CD4-positive, alpha-beta T cell (primary cell): ENCODE measurements at regions of chr20 and their contacts with region 1.

Region 1: GRCh38 chr20:44475694-44476560 is at the start of gene TTPAL:
- DNase-seq: peak; percentile 75 to 95 (median 86)
- ATAC-seq: peak; percentile 95
- H3K4me3 ChIP-seq: peak within 1 kb of the TSS; percentile 90
- H3K4me3 Mint-ChIP-seq: peak within 1 kb of the TSS; percentile 95
- H3K27ac ChIP-seq: peak within 1 kb of the TSS; percentile 89 to 98
- H3K27ac Mint-ChIP-seq: peak within 1 kb of the TSS; percentile 96
- H3K4me1 ChIP-seq: peaks cover 18% of the 10 kb centered on the region
- H3K4me1 Mint-ChIP-seq: peaks cover 26% of the 10 kb centered on the region
- H3K27me3 ChIP-seq: no peaks in the 10 kb centered on the region
- H3K27me3 Mint-ChIP-seq: no peaks in the 10 kb centered on the region
- CTCF ChIP-seq: no peak
- total RNA-seq, gene TTPAL: 9.0 to 9.9 TPM

Region 2: DNA sequence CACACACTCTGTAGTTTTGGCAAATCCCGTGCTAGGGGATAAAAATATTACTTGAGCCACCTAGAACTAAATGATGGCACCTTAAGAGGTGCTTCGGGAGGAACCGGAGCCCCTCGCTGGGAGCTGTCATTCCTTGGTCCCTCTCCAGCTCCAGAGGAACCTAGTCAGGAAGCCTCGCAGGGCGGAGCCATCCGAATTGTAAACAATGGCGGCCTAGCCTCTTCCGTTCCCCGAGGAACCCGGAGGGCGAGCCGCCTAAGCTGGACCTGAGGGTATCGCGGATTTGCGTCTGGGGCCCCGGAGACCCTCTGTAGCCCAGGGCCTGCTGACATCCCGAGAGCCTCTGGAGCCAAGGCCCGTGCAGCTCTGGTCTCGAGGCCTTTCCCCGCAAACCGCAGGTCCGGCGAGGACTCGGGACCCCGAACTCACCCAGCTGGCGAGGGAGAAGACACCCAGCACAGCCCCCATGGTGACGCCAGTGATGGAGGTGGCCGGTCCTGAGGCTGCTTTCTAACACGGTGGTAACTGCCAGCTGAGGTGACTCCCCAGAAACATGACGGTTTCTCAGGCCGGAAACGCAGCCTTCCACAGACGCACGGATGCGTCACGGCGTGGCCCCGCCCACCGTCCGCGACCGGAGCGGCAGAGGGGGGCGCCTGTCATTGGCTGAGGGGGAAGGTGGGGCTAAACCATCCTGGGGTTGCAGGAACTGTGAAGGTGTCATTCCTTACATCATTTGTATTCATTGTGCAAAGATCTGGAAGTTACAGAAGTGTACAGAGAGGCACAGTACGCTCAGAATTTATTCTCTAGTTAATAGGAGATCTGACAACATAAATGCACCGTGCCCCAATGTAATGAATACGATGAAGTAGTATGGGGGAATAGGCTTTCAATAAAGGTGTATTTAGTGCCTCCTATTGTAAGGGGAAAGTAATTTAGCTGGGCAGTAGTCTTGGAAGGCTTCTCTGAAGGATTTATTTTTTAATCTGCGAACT is 45.9 kb after region 1 on chr20 and contains the start of gene SERINC3:
- CTCF ChIA-PET with region 1: no interaction called
- POLR2A ChIA-PET with region 1: interaction called, 29 read pairs
- intact Hi-C with region 1: loop called (anchors 2 kb)
- DNase-seq: peak; percentile 90 to 99 (median 97)
- ATAC-seq: peak; percentile 93
- H3K4me3 ChIP-seq: peak within 1 kb of the TSS; percentile 98
- H3K4me3 Mint-ChIP-seq: peak within 1 kb of the TSS; percentile 89
- H3K27ac ChIP-seq: peak within 1 kb of the TSS; percentile 95 to 99
- H3K27ac Mint-ChIP-seq: peak within 1 kb of the TSS; percentile 93
- H3K4me1 ChIP-seq: peaks cover 44% of the 10 kb centered on the region
- H3K4me1 Mint-ChIP-seq: peaks cover 58% of the 10 kb centered on the region
- H3K27me3 ChIP-seq: no peaks in the 10 kb centered on the region
- H3K27me3 Mint-ChIP-seq: no peaks in the 10 kb centered on the region
- CTCF ChIP-seq: peak; percentile 46
- total RNA-seq, gene SERINC3: 39.5 to 40.2 TPM